CD8-positive, alpha-beta T cell (primary cell): ENCODE measurements at regions of chr3 and their contacts with region 1.

Region 1: GRCh38 chr3:56775838-56776555 is 25.8 kb downstream of the ARHGEF3 start:
- DNase-seq: no peak
- ATAC-seq: no peak
- H3K4me3 ChIP-seq: no peak overlapping the region
- H3K4me3 Mint-ChIP-seq: peak overlapping the region; percentile 48
- H3K27ac ChIP-seq: peak overlapping the region in 1 of 2 experiments; percentile 48
- H3K27ac Mint-ChIP-seq: peak overlapping the region; percentile 88
- H3K4me1 ChIP-seq: peaks cover 85% of the 10 kb centered on the region
- H3K4me1 Mint-ChIP-seq: peaks cover 91% of the 10 kb centered on the region
- H3K27me3 ChIP-seq: no peaks in the 10 kb centered on the region
- H3K27me3 Mint-ChIP-seq: no peaks in the 10 kb centered on the region
- CTCF ChIP-seq: no peak

Region 2: DNA sequence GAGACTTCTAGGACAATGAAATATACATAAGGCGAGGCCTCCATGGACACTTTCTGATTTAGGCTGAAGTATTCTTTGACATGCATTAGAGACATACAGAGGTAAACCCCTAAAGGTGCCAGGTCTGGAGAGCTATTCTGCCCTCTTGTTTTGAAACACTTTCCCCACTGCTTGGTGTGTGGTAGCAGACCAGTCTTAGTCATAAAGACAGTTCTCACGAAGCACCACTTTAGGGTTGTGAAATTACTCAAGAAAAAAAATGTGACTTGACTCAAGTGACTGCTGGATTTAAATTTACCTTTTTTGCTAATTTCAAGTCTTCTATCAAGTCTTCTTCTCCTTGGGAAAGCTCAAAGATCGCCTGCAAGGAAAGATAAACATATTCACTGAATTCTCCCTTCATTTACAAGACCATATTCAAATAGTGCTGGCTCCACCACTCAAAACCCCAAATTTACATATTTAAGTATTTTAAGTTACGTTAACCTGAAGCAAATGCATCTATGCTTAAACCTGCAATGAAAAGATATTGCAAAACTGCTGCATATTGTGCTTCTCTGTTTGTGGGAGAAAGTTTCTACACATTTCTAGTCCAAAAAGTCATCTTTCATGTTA is 22.7 kb before region 1 on chr3:
- CTCF ChIA-PET with region 1: interaction called, 5 read pairs
- POLR2A ChIA-PET with region 1: interaction called, 12 read pairs
- intact Hi-C with region 1: no loop called
- DNase-seq: peak in 5 of 9 experiments; percentile 22 to 56 (median 45)
- ATAC-seq: peak; percentile 27
- H3K4me3 ChIP-seq: no peak overlapping the region
- H3K4me3 Mint-ChIP-seq: peak overlapping the region; percentile 47
- H3K27ac ChIP-seq: peak overlapping the region; percentile 62 to 79
- H3K27ac Mint-ChIP-seq: peak overlapping the region; percentile 100
- H3K4me1 ChIP-seq: peaks cover 52% of the 10 kb centered on the region
- H3K4me1 Mint-ChIP-seq: peaks cover 66% of the 10 kb centered on the region
- H3K27me3 ChIP-seq: no peaks in the 10 kb centered on the region
- H3K27me3 Mint-ChIP-seq: no peaks in the 10 kb centered on the region
- CTCF ChIP-seq: no peak

Region 3: DNA sequence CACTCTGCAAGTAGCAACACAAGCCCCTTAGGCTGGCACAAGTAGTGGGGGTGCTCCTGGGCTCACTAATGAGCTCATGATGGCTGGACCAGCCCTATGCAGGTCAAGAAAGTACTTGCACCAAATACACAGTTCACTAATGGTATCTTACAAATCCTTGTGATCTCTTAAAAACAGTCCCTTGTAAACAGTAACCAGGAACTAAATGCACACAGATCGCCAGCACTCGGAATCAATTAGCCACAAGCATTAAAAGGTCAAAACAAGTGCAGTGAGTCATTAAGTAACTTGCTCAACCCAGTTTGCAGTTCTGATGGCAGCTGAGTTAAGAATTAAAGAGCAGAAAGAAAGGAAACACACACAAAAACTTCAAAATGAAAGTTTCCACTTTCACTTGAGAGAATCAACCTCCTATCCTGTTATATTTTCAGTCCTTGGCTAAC is 17.4 kb before region 1 on chr3:
- CTCF ChIA-PET with region 1: interaction called, 5 read pairs
- POLR2A ChIA-PET with region 1: interaction called, 12 read pairs
- intact Hi-C with region 1: loop called in 1 of 2 experiments (anchors 2 kb)
- DNase-seq: peak in 8 of 9 experiments; percentile 17 to 58 (median 35)
- ATAC-seq: peak; percentile 53
- H3K4me3 ChIP-seq: no peak overlapping the region
- H3K4me3 Mint-ChIP-seq: peak overlapping the region; percentile 48
- H3K27ac ChIP-seq: peak overlapping the region; percentile 41 to 70
- H3K27ac Mint-ChIP-seq: peak overlapping the region; percentile 90
- H3K4me1 ChIP-seq: peaks cover 72% of the 10 kb centered on the region
- H3K4me1 Mint-ChIP-seq: peaks cover 82% of the 10 kb centered on the region
- H3K27me3 ChIP-seq: no peaks in the 10 kb centered on the region
- H3K27me3 Mint-ChIP-seq: no peaks in the 10 kb centered on the region
- CTCF ChIP-seq: no peak